ENCODE measurements at regions of chr2 and their contacts with region 1.

Region 1: GRCh38 chr2:10448208-10448645 is at the start of gene ODC1:
- DNase-seq: peak; percentile 97
- ATAC-seq: peak; percentile 66
- H3K4me3 ChIP-seq: peak within 1 kb of the TSS; percentile 94
- H3K27ac ChIP-seq: peak within 1 kb of the TSS; percentile 92
- H3K4me1 ChIP-seq: peaks cover 51% of the 10 kb centered on the region
- H3K27me3 ChIP-seq: no peaks in the 10 kb centered on the region
- CTCF ChIP-seq: no peak
- total RNA-seq, gene ODC1: 712 and 714 TPM in 2 replicates

Region 2: DNA sequence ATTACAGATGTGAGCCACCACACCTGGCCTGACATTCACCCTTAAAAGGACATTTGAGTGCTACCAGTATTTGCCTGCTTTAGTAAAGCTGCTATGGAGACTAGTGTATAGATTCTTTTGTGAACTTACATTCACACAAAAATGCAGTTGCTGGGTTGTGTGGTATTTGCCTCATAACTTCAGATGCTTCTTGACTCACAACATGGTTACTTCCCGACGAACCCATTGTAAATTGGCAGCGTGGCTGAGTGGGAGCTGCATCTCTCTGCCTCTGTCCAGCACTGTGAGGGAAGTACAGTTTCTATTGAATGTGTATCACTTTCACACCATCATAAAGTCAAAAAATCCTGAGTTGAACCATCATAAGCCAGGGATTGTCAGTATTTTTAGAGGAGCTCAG is 268.8 kb before region 1 on chr2:
- CTCF ChIA-PET with region 1: no interaction called
- POLR2A ChIA-PET with region 1: no interaction called
- intact Hi-C with region 1: no loop called
- DNase-seq: no peak
- ATAC-seq: no peak
- H3K4me3 ChIP-seq: no peak overlapping the region
- H3K27ac ChIP-seq: no peak overlapping the region
- H3K4me1 ChIP-seq: no peaks in the 10 kb centered on the region
- H3K27me3 ChIP-seq: no peaks in the 10 kb centered on the region
- CTCF ChIP-seq: no peak

Region 3: DNA sequence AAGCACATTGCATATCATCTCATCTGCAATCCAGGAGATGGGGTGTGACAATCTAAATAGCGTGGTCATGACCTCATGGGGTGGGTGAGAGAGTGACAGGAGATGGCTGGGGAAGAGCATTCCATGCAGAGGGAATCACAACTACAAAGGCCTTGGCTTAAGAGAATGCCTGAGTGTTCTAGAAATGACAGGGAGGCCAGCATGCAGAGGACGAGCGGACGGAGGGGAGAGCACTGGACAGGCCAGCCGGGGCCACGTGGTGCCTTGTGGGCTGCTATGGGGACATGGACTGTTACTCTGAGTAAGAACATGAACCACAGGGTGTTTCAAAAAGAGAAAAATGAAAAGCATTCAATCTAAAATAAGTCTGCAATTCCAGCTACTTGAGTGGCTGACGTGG is 117.8 kb after region 1 on chr2:
- CTCF ChIA-PET with region 1: no interaction called
- POLR2A ChIA-PET with region 1: no interaction called
- intact Hi-C with region 1: no loop called
- DNase-seq: peak; percentile 16
- ATAC-seq: no peak
- H3K4me3 ChIP-seq: no peak overlapping the region
- H3K27ac ChIP-seq: no peak overlapping the region
- H3K4me1 ChIP-seq: no peaks in the 10 kb centered on the region
- H3K27me3 ChIP-seq: no peaks in the 10 kb centered on the region
- CTCF ChIP-seq: no peak

Region 4: GRCh38 chr2:10592652-10593051 is 144.4 kb after region 1 on chr2:
- CTCF ChIA-PET with region 1: no interaction called
- POLR2A ChIA-PET with region 1: interaction called, 21 read pairs
- intact Hi-C with region 1: loop called (anchors 5 kb)
- DNase-seq: peak; percentile 55
- ATAC-seq: peak; percentile 68
- H3K4me3 ChIP-seq: no peak overlapping the region
- H3K27ac ChIP-seq: 0 out of 2 replicates have a peak overlapping the region, but pooled peaks have one; percentile 5
- H3K4me1 ChIP-seq: peaks cover 27% of the 10 kb centered on the region
- H3K27me3 ChIP-seq: no peaks in the 10 kb centered on the region
- CTCF ChIP-seq: no peak

Region 5: GRCh38 chr2:10597935-10598334 is 149.7 kb after region 1 on chr2:
- CTCF ChIA-PET with region 1: no interaction called
- POLR2A ChIA-PET with region 1: interaction called, 9 read pairs
- intact Hi-C with region 1: loop called (anchors 5 kb)
- DNase-seq: peak; percentile 94
- ATAC-seq: peak; percentile 90
- H3K4me3 ChIP-seq: peak overlapping the region; percentile 52
- H3K27ac ChIP-seq: peak overlapping the region; percentile 90
- H3K4me1 ChIP-seq: peaks cover 39% of the 10 kb centered on the region
- H3K27me3 ChIP-seq: no peaks in the 10 kb centered on the region
- CTCF ChIP-seq: no peak